PC-9 (cell line): ENCODE measurements at regions of chr11 and their contacts with region 1.

Region 1: GRCh38 chr11:76459299-76459698 is 14.5 kb downstream of the EMSY start:
- DNase-seq: no peak
- H3K4me3 ChIP-seq: no peak overlapping the region
- H3K27ac ChIP-seq: no peak overlapping the region
- H3K4me1 ChIP-seq: 0 out of 2 replicates have a peak, but pooled peaks cover 12% of the 10 kb centered on the region
- H3K27me3 ChIP-seq: no peaks in the 10 kb centered on the region
- CTCF ChIP-seq: peak; percentile 70

Region 2: DNA sequence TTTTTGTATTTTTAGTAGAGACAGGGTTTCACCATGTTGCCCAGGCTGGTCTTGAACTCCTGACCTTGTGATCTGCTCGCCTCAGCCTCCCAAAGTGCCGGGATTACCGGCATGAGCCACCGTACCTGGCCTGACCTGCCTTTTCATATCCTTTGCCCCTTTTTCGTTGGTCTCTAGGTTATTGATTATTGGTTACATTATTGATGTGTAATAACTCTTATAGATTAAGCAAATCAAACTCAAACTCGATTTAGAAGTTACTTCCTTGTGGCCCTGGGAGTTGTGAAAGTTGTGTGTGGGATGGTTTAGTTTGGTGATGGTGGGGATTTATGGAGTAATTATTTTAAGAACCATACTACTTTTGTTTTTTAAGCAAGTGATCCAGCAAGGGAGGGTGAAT is 616.7 kb before region 1 on chr11:
- CTCF ChIA-PET with region 1: interaction called, 10 read pairs
- POLR2A ChIA-PET with region 1: no interaction called
- intact Hi-C with region 1: no loop called
- DNase-seq: no peak
- H3K4me3 ChIP-seq: no peak overlapping the region
- H3K27ac ChIP-seq: no peak overlapping the region
- H3K4me1 ChIP-seq: peaks cover 16% of the 10 kb centered on the region
- H3K27me3 ChIP-seq: no peaks in the 10 kb centered on the region
- CTCF ChIP-seq: no peak